GM13976 (cell line): ENCODE measurements at regions of chr3 and their contacts with region 1.

Region 1: DNA sequence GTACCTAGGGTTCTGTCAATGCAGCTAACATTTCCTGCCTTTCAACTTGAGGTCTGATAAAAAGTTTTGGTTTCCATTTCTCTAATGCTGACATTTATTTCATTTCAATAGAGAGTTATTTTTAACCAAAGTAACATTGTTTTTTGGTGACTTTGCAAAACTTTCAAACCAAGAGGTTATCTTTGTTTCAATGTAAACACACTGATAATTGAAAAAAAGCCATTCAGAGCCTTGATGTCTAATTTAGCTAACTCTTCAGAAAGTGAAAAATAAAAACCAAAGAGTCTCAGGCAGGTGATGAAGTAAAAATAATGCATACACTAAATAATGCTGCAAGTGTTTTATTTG is 9.6 kb upstream of the TIPARP start:
- DNase-seq: peak; percentile 51
- CTCF ChIP-seq: no peak

Region 2: GRCh38 chr3:156547637-156548036 is 117.2 kb before region 1 on chr3:
- in situ Hi-C with region 1: loop called (anchors 10 kb)
- DNase-seq: no peak
- CTCF ChIP-seq: no peak